MCF 10A (cell line): ENCODE measurements at regions of chrX and their contacts with region 1.

Region 1: GRCh38 chrX:153927922-153928760 is 2.1 kb upstream of the ARHGAP4 start:
- DNase-seq: peak; percentile 95
- H3K4me3 Mint-ChIP-seq: peak overlapping the region; percentile 79
- H3K27ac Mint-ChIP-seq: peak overlapping the region; percentile 74
- H3K4me1 Mint-ChIP-seq: peaks cover 1% of the 10 kb centered on the region
- H3K27me3 Mint-ChIP-seq: no peaks in the 10 kb centered on the region
- CTCF ChIP-seq: peak; percentile 10

Region 2: GRCh38 chrX:153381684-153382532 is 546.2 kb before region 1 on chrX:
- CTCF ChIA-PET with region 1: no interaction called
- POLR2A ChIA-PET with region 1: no interaction called
- intact Hi-C with region 1: no loop called
- DNase-seq: peak; percentile 37
- H3K4me3 Mint-ChIP-seq: no peak overlapping the region
- H3K27ac Mint-ChIP-seq: no peak overlapping the region
- H3K4me1 Mint-ChIP-seq: no peaks in the 10 kb centered on the region
- H3K27me3 Mint-ChIP-seq: no peaks in the 10 kb centered on the region
- CTCF ChIP-seq: no peak

Region 3: GRCh38 chrX:153669174-153669890 is 258.8 kb before region 1 on chrX:
- CTCF ChIA-PET with region 1: no interaction called
- POLR2A ChIA-PET with region 1: no interaction called
- intact Hi-C with region 1: no loop called
- DNase-seq: no peak
- H3K4me3 Mint-ChIP-seq: no peak overlapping the region
- H3K27ac Mint-ChIP-seq: no peak overlapping the region
- H3K4me1 Mint-ChIP-seq: no peaks in the 10 kb centered on the region
- H3K27me3 Mint-ChIP-seq: no peaks in the 10 kb centered on the region
- CTCF ChIP-seq: peak; percentile 67

Region 4: DNA sequence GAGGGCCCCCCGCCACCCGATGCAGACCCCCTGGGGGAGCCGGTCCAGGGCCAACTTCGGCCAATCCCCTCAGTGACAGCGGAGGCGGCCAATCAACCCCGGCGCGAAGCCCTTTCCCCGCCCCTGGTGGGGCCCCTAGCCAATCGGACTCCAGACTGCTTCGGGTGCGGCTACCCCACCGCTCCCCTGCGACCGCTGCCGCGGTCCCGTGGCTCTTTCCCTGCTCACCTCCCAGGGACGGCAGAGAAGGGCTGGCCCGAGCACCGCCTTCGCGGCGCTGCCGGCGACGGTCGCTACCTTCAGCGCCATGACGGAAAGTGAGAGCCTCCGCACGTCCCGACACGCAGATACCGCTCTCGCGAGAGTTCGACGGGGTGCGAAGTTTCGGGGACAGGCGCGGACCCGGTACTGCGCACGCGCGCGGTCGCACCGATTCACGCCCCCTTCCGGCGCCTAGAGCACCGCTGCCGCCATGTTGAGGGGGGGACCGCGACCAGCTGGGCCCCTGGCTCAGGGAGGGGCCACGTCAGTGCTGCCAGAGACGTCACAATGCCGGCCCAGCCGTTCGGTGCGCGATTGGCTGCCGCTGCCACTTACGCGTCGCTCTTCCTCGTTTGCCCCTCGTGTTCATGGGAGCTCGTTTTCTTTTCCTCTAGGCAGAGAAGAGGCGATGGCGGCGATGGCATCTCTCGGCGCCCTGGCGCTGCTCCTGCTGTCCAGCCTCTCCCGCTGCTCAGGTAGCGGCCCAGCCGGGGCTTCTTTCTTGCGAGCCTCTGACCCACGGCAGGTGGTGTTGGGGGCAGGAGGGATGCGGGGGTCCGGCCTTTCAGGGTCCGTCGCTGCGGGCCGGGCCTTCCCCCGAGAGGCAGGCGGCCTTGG is 133.9 kb before region 1 on chrX and contains the starts of genes IDH3G and SSR4:
- CTCF ChIA-PET with region 1: no interaction called
- POLR2A ChIA-PET with region 1: interaction called, 25 read pairs
- intact Hi-C with region 1: no loop called
- DNase-seq: peak; percentile 90
- H3K4me3 Mint-ChIP-seq: peak within 1 kb of the TSS; percentile 91
- H3K27ac Mint-ChIP-seq: peak within 1 kb of the TSS; percentile 91
- H3K4me1 Mint-ChIP-seq: no peaks in the 10 kb centered on the region
- H3K27me3 Mint-ChIP-seq: no peaks in the 10 kb centered on the region
- CTCF ChIP-seq: no peak
- total RNA-seq, gene IDH3G: 56.5 and 65.4 TPM in 2 replicates
- total RNA-seq, gene SSR4: 328 and 371 TPM in 2 replicates

Region 5: DNA sequence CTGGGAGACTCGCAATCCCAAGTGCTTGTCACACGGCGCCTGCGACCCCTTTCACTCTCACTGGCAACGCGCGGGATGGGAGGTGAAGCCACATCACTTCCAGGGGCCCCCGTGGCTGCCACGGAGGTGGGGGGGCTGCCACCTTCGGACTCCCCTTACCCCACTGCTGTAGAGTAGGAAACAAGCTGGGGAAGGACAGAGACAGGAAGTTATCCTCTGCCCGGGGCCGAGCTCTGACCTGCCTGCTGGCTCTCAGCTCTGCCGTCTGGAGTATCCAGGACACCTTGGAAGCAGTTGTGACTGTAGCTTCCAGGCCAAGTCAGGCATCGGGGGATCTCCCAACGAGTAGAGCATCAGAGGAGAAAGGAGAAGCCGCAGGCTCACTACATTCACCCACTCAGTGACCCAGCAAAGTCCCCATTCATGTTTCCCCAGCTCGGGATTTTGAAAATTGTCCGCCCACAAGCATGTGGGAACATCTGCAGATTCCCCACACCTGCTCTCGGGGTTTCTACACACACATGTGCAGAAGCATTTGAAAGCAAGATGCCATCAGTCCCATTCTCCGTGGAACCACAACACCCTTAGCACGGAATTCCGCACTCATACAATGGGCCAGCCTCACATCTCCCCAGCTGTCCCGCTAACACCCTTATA is 108.6 kb before region 1 on chrX:
- CTCF ChIA-PET with region 1: no interaction called
- POLR2A ChIA-PET with region 1: no interaction called
- intact Hi-C with region 1: no loop called
- DNase-seq: no peak
- H3K4me3 Mint-ChIP-seq: no peak overlapping the region
- H3K27ac Mint-ChIP-seq: no peak overlapping the region
- H3K4me1 Mint-ChIP-seq: no peaks in the 10 kb centered on the region
- H3K27me3 Mint-ChIP-seq: peaks cover 29% of the 10 kb centered on the region
- CTCF ChIP-seq: no peak

Region 6: GRCh38 chrX:153909024-153909970 is 18.8 kb before region 1 on chrX:
- CTCF ChIA-PET with region 1: interaction called, 31 read pairs
- POLR2A ChIA-PET with region 1: interaction called, 3 read pairs
- intact Hi-C with region 1: no loop called
- DNase-seq: no peak
- H3K4me3 Mint-ChIP-seq: no peak overlapping the region
- H3K27ac Mint-ChIP-seq: no peak overlapping the region
- H3K4me1 Mint-ChIP-seq: no peaks in the 10 kb centered on the region
- H3K27me3 Mint-ChIP-seq: peaks cover 14% of the 10 kb centered on the region
- CTCF ChIP-seq: no peak

Region 7: DNA sequence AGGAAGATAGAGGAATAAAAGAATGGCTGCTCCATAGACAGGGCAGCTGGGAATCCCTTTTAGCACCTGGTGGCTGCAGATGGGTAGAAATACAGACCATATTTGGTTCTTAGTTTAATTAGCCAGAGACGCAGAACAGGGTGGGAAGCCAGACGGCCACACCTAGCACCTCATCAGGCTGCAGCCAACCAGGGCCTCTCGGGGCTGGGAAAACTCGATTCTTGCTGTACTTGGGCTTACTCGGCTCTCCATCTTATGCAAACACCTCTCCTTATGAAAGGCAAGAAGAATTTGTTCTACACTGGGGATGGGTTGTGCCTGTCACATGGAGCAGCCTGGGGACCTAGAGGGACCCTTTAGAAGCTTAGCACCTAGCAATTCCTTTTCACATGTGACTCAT is 71.9 kb after region 1 on chrX:
- CTCF ChIA-PET with region 1: no interaction called
- POLR2A ChIA-PET with region 1: no interaction called
- intact Hi-C with region 1: no loop called
- DNase-seq: no peak
- H3K4me3 Mint-ChIP-seq: no peak overlapping the region
- H3K27ac Mint-ChIP-seq: no peak overlapping the region
- H3K4me1 Mint-ChIP-seq: peaks cover 6% of the 10 kb centered on the region
- H3K27me3 Mint-ChIP-seq: peaks cover 49% of the 10 kb centered on the region
- CTCF ChIP-seq: no peak